CD8-positive, alpha-beta T cell (primary cell): ENCODE measurements at regions of chr14 and their contacts with region 1.

Region 1: DNA sequence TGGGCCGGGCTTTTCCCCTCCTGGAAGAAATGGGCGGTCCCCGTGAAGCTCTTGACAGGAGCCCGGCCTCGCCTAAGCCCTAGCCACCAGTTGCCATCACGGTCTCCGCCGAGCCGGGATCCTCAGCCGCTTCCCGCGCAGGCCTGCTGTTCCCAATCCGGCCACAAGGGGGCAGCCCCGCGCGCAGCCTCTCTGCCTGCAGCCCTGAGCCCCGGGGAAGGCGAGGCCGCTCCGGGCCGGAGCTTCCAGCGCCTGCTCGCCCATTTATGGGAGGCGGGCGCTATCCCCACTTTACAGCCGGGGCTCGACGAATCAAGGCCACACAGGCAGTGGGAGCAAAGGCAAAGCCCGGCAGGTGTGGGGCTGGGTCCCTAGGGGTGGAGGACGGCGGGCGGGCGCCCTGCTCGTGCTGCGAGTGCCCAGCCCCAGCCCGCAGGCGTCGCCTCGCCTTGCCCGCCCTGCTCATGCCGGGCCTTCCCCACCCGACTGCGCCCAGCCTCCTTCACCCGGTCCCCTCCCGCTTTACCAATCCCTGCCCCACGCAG is 61.5 kb downstream of the LGMN start:
- DNase-seq: peak; percentile 16 to 87 (median 49)
- ATAC-seq: peak; percentile 89
- H3K4me3 ChIP-seq: no peak overlapping the region
- H3K4me3 Mint-ChIP-seq: no peak overlapping the region
- H3K27ac ChIP-seq: no peak overlapping the region
- H3K27ac Mint-ChIP-seq: peak overlapping the region; percentile 57
- H3K4me1 ChIP-seq: peaks cover 2% of the 10 kb centered on the region
- H3K4me1 Mint-ChIP-seq: peaks cover 6% of the 10 kb centered on the region
- H3K27me3 ChIP-seq: no peaks in the 10 kb centered on the region
- H3K27me3 Mint-ChIP-seq: no peaks in the 10 kb centered on the region
- CTCF ChIP-seq: peak; percentile 92

Region 2: GRCh38 chr14:92323011-92323915 is 363.7 kb before region 1 on chr14 and contains the start of gene SLC24A4:
- CTCF ChIA-PET with region 1: no interaction called
- POLR2A ChIA-PET with region 1: no interaction called
- intact Hi-C with region 1: loop called in 1 of 2 experiments (anchors 10 kb)
- DNase-seq: peak in 1 of 9 experiments; percentile 17
- ATAC-seq: no peak
- H3K4me3 ChIP-seq: peak within 1 kb of the TSS in 1 of 2 experiments; percentile 27
- H3K4me3 Mint-ChIP-seq: peak within 1 kb of the TSS; percentile 68
- H3K27ac ChIP-seq: no peak within 1 kb of the TSS
- H3K27ac Mint-ChIP-seq: no peak within 1 kb of the TSS
- H3K4me1 ChIP-seq: no peaks in the 10 kb centered on the region
- H3K4me1 Mint-ChIP-seq: peaks cover 11% of the 10 kb centered on the region
- H3K27me3 ChIP-seq: peaks cover 3 to 4% of the 10 kb centered on the region in 2 experiments
- H3K27me3 Mint-ChIP-seq: peaks cover 48% of the 10 kb centered on the region
- CTCF ChIP-seq: no peak
- total RNA-seq, gene SLC24A4: 0.06 TPM in 1 of 2 experiments, not detected in the other

Region 3: GRCh38 chr14:92937051-92937937 is 250.3 kb after region 1 on chr14:
- CTCF ChIA-PET with region 1: no interaction called
- POLR2A ChIA-PET with region 1: no interaction called
- intact Hi-C with region 1: no loop called
- DNase-seq: no peak
- ATAC-seq: no peak
- H3K4me3 ChIP-seq: no peak overlapping the region
- H3K4me3 Mint-ChIP-seq: no peak overlapping the region
- H3K27ac ChIP-seq: no peak overlapping the region
- H3K27ac Mint-ChIP-seq: no peak overlapping the region
- H3K4me1 ChIP-seq: no peaks in the 10 kb centered on the region
- H3K4me1 Mint-ChIP-seq: no peaks in the 10 kb centered on the region
- H3K27me3 ChIP-seq: no peaks in the 10 kb centered on the region
- H3K27me3 Mint-ChIP-seq: no peaks in the 10 kb centered on the region
- CTCF ChIP-seq: no peak

Region 4: DNA sequence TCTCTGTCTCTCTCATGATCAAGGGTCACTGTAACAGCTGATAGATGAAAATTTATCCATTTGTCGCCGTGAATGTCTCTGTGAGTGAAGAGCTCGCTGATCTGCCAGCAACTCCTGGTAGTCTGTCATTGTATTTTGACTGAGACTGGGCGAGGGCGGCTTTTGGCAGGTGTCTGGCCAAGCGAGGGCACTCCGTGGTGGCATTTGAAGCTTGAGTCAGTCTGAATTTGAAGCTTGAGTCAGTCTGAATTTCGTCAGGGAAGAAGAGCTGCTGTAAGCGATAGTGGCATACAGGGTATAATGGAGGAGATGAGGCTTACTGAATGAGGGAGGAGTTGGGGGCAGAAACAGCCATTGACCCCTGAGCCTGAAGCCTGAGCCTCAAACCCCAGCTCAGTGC is 1183.4 kb after region 1 on chr14:
- CTCF ChIA-PET with region 1: no interaction called
- POLR2A ChIA-PET with region 1: no interaction called
- intact Hi-C with region 1: no loop called
- DNase-seq: no peak
- ATAC-seq: no peak
- H3K4me3 ChIP-seq: no peak overlapping the region
- H3K4me3 Mint-ChIP-seq: no peak overlapping the region
- H3K27ac ChIP-seq: no peak overlapping the region
- H3K27ac Mint-ChIP-seq: no peak overlapping the region
- H3K4me1 ChIP-seq: no peaks in the 10 kb centered on the region
- H3K4me1 Mint-ChIP-seq: no peaks in the 10 kb centered on the region
- H3K27me3 ChIP-seq: no peaks in the 10 kb centered on the region
- H3K27me3 Mint-ChIP-seq: peaks cover 29% of the 10 kb centered on the region
- CTCF ChIP-seq: no peak